AG04449 (cell line): ENCODE measurements at regions of chr2 and their contacts with region 1.

Region 1: GRCh38 chr2:181742922-181743722 is 62.8 kb upstream of the NEUROD1 start:
- DNase-seq: no peak
- H3K4me3 ChIP-seq: no peak overlapping the region
- CTCF ChIP-seq: peak; percentile 37

Region 2: GRCh38 chr2:181289698-181290097 is 453.4 kb before region 1 on chr2:
- CTCF ChIA-PET with region 1: no interaction called
- POLR2A ChIA-PET with region 1: no interaction called
- DNase-seq: no peak
- H3K4me3 ChIP-seq: no peak overlapping the region
- CTCF ChIP-seq: no peak

Region 3: DNA sequence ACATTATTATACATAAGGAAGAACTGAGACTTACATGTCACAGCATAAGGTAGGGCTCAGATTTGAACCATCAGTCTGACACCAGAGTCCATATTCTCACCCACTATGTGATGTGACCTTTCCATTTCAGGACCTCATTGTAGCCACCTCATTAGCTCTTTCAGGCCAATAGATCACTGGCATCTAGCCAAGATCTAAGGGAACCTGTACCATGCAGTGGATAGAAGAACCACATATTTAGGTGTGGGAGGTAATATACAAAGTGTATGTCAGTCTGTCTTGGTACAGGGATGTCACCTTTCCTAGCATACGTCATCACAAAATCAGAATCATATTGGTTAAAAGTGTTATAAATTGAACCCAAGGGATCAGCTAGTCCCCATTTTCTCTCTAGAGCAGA is 15.2 kb after region 1 on chr2:
- CTCF ChIA-PET with region 1: interaction called, 15 read pairs
- POLR2A ChIA-PET with region 1: no interaction called
- DNase-seq: no peak
- H3K4me3 ChIP-seq: no peak overlapping the region
- CTCF ChIP-seq: no peak

Region 4: GRCh38 chr2:181891258-181891965 is 148.3 kb after region 1 on chr2 and contains the start of gene ITPRID2:
- CTCF ChIA-PET with region 1: interaction called, 136 read pairs
- POLR2A ChIA-PET with region 1: interaction called, 3 read pairs
- DNase-seq: no peak
- H3K4me3 ChIP-seq: peak within 1 kb of the TSS; percentile 92
- CTCF ChIP-seq: no peak

Region 5: GRCh38 chr2:181937473-181937872 is 194.4 kb after region 1 on chr2:
- CTCF ChIA-PET with region 1: interaction called, 13 read pairs
- POLR2A ChIA-PET with region 1: no interaction called
- DNase-seq: peak; percentile 38
- H3K4me3 ChIP-seq: no peak overlapping the region
- CTCF ChIP-seq: no peak

Region 6: DNA sequence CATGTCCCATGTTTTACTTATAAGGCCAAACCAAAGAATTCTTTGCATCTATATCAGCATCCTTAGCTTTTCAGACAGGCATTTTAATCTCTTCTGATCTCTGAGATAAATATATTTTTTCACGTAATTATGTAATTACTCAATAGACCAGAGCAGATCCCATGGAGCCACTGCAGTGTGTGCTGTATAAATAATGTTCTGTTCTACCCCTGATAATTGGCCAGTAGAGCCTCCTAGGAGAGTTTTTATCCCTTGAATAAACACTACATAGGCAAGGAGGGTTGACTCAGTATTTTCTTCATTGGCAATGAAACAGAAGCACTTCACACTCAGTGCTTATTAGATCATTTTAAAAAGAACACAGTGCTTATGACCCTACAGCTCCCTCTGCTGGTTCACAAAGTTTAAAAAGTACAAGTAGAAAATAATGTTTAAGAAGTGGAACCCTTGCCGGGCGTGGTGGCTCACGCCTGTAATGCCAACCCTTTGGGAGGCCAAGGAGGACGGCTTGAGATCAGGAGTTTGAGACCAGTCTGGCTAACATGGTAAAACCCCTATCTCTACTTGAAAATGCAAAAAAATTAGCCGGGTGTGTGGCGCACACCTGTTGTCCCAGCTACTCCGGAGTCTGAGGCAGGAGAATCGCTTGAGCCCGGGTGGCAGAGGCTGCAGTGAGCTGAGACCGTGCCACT is 334.5 kb after region 1 on chr2:
- CTCF ChIA-PET with region 1: interaction called, 69 read pairs
- POLR2A ChIA-PET with region 1: no interaction called
- DNase-seq: peak; percentile 84
- H3K4me3 ChIP-seq: no peak overlapping the region
- CTCF ChIP-seq: peak; percentile 46